CD14-positive monocyte (primary cell): ENCODE measurements at regions of chr17 and their contacts with region 1.

Region 1: DNA sequence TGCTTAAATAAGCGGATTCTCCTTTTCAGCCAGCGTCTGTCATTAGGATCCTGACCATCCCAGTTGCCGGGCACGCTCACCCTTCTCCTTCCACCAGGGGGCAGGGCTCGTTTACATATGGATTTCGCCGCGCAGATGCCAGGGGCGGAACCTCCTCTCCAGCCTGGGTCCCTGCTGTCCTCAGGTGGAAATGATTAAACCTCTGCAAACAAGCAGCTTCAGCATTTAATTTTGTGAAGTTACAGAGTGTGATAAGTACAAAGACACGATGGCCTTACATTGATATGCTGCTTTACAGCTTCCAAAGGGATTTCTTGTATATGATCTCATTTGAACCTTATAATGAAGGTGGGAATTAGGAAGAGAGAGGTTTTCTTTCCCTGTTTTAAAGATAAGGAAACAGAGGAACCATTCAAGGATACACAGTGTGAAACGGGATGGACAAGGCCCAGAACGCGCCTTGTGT is 3.9 kb upstream of the KRT28 start:
- DNase-seq: peak; percentile 51 to 66 (median 59)
- H3K4me3 ChIP-seq: no peak overlapping the region
- H3K4me3 Mint-ChIP-seq: no peak overlapping the region
- H3K27ac ChIP-seq: no peak overlapping the region
- H3K27ac Mint-ChIP-seq: no peak overlapping the region
- H3K4me1 ChIP-seq: no peaks in the 10 kb centered on the region
- H3K4me1 Mint-ChIP-seq: no peaks in the 10 kb centered on the region
- H3K27me3 ChIP-seq: peaks cover 35 to 42% of the 10 kb centered on the region in 2 donors
- H3K27me3 Mint-ChIP-seq: peaks cover 29 to 38% (median 33%) of the 10 kb centered on the region in 3 donors
- CTCF ChIP-seq: peak; percentile 89

Region 2: DNA sequence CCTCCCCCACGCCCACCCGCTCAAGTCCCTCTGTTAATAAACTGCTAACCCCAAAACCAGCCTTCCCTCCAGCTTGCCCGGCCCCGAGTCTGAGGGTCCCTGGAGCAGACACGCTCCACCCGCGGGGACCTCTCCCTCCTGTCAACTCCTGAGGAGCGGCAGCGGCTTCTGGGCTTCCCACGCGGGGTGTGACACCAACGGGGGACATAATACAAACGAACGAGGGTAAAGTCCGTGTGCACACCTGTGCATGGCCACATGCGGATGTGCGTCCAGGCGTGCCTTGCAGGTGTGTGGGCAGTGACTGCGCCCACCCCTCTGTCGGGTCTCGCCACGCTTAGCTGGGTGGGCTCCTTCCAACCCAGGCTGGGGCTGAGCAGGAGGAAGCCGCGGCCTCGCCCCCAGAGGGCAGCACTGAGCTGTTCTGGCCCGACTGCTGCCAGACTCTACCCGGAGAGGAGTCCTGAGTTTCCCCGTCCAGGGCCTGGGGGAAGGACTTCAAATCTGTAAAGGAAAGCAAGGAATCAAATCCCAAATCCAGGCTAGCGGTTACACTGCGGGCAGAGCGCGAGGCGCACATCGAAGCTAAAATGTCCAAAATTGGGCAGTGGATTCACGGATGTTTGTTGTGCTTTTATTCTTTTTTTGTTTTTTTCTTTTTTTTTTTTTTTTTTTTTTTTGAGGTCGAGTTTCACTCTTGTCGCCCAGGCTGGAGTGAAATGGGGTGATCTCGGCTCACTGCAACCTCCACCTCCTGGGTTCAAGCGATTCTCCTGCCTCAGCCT is 845.0 kb after region 1 on chr17:
- intact Hi-C with region 1: loop called (anchors 5 kb)
- DNase-seq: peak; percentile 71 to 81 (median 80)
- H3K4me3 ChIP-seq: peak overlapping the region in 2 of 3 experiments; percentile 15 to 75
- H3K4me3 Mint-ChIP-seq: peak overlapping the region; percentile 72 to 82
- H3K27ac ChIP-seq: no peak overlapping the region
- H3K27ac Mint-ChIP-seq: peak overlapping the region in 3 of 7 donors; percentile 79 to 87 (median 82)
- H3K4me1 ChIP-seq: peaks cover 32 to 36% of the 10 kb centered on the region in 2 donors
- H3K4me1 Mint-ChIP-seq: peaks cover 26% of the 10 kb centered on the region
- H3K27me3 ChIP-seq: no peaks in the 10 kb centered on the region
- H3K27me3 Mint-ChIP-seq: peaks cover 2 to 7% (median 6%) of the 10 kb centered on the region in 3 donors
- CTCF ChIP-seq: peak; percentile 85